ENCODE measurements at regions of chr14 and their contacts with region 1.

Region 1: DNA sequence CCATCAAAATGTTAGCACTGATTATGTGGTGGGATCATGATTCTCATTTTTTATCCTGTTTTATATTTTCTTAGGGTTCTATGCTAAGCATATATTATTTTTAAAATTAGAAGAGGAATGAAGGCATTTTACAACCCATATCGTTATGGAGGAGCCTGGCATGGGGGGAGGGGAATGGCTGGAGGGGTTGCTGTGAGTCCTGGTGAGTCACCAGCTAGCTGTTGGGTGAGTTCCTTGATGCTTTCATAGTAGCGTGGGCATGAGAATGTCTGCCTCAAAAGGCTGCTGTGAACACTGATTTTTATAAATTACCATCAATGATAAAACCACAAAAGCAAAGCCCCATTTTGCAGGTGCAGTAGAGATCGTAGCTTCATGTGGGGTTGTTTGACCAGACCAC is 46.9 kb downstream of the C14orf132 start:
- DNase-seq: no peak
- ATAC-seq: no peak
- H3K4me3 ChIP-seq: no peak overlapping the region
- H3K27ac ChIP-seq: no peak overlapping the region
- H3K4me1 ChIP-seq: peaks cover 3% of the 10 kb centered on the region
- H3K27me3 ChIP-seq: no peaks in the 10 kb centered on the region

Region 2: DNA sequence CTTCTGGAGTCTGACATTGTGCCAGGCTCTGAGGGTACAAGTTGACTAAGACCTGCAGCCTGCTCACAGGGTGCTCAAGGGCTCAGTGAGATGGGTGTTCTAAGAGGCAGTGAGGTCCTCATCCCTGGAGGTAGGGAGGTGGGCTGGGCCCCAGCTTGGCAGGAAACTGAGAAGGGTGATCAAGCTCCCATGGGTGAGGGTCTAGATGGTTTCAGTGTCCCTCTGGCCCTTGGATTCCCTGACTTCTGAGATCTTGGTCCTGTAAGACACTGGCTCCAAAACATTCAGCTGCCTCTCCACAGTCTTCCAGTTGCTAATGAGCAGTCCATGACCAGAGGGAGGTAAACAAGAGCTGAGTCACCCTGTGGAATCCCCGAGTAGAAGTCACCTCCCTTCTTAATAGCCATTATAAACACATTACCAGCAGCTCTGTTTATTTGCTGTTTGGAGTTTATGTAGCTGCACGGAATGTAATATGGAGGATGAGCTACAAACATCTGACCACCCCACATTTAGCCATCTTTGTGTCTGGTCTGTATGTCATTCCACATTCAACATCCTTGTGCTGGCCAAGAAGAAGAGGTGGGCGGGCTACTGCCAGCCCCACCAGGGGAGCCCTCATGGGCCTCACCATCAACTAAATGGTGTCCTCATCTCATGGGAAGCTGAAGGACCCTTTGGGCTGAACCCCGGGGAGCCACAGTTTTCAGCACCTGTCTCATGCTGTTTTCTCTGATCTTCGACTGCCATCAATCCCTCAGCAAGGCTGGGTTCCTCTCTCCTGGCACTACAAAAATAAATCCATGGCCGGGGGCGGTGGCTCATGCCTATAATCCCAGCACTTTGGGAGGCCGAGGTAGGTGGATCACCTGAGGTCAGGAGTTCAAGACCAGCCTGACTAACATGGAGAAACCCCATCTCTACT is 81.4 kb after region 1 on chr14:
- intact Hi-C with region 1: no loop called
- DNase-seq: no peak
- ATAC-seq: no peak
- H3K4me3 ChIP-seq: no peak overlapping the region
- H3K27ac ChIP-seq: no peak overlapping the region
- H3K4me1 ChIP-seq: no peaks in the 10 kb centered on the region
- H3K27me3 ChIP-seq: no peaks in the 10 kb centered on the region

Region 3: DNA sequence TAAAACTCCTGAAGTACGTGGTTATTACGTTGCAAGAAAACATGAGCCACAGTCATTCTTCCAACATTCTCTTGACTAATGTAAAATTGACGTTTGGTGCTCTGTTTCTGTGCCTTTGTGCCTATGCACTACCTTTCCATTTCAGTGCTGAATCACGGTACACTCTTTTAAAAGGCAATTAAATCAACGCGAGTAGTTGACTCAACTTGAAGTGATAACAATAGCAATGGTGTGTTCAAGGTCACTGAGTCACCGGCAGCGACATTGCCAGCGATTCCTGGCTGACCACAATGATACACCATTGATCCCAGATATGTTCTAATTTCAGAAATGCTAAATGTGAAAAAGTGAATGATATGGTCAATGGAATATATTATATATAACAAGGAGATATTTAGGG is 323.7 kb after region 1 on chr14:
- intact Hi-C with region 1: loop called in 1 of 4 experiments (anchors 10 kb)
- DNase-seq: no peak
- ATAC-seq: no peak
- H3K4me3 ChIP-seq: no peak overlapping the region
- H3K27ac ChIP-seq: no peak overlapping the region
- H3K4me1 ChIP-seq: no peaks in the 10 kb centered on the region
- H3K27me3 ChIP-seq: no peaks in the 10 kb centered on the region

Measured in right cardiac atrium (tissue), 5 donors.